GM12878 (cell line): ENCODE measurements at regions of chr1 and their contacts with region 1.

Region 1: GRCh38 chr1:223133824-223134435 is 9.1 kb downstream of the TLR5 start:
- DNase-seq: peak; percentile 15
- ATAC-seq: peak; percentile 84
- H3K4me3 ChIP-seq: no peak overlapping the region
- H3K27ac ChIP-seq: no peak overlapping the region
- H3K4me1 ChIP-seq: no peaks in the 10 kb centered on the region
- H3K27me3 ChIP-seq: peaks cover 0 to 12% of the 10 kb centered on the region in 2 experiments; a peak in 2 of 4 replicates
- CTCF ChIP-seq: peak; percentile 88 to 95 (median 93)
- EP300 ChIP-seq: no peak
- POLR2A ChIP-seq: no peak
- RAD21 ChIP-seq: peak; percentile 78

Region 2: GRCh38 chr1:223123011-223123610 is 10.8 kb before region 1 on chr1:
- CTCF ChIA-PET with region 1: interaction called, 88 read pairs
- POLR2A ChIA-PET with region 1: interaction called, 5 read pairs
- RAD21 ChIA-PET with region 1: interaction called, 11 read pairs
- SMC1A ChIA-PET with region 1: interaction called, 30 read pairs
- in situ Hi-C with region 1: no loop called
- intact Hi-C with region 1: no loop called
- DNase-seq: no peak
- ATAC-seq: no peak
- H3K4me3 ChIP-seq: no peak overlapping the region
- H3K27ac ChIP-seq: no peak overlapping the region
- H3K4me1 ChIP-seq: no peaks in the 10 kb centered on the region
- H3K27me3 ChIP-seq: no peaks in the 10 kb centered on the region; a peak in 1 of 4 replicates
- CTCF ChIP-seq: no peak
- EP300 ChIP-seq: no peak
- POLR2A ChIP-seq: no peak
- RAD21 ChIP-seq: no peak

Region 3: DNA sequence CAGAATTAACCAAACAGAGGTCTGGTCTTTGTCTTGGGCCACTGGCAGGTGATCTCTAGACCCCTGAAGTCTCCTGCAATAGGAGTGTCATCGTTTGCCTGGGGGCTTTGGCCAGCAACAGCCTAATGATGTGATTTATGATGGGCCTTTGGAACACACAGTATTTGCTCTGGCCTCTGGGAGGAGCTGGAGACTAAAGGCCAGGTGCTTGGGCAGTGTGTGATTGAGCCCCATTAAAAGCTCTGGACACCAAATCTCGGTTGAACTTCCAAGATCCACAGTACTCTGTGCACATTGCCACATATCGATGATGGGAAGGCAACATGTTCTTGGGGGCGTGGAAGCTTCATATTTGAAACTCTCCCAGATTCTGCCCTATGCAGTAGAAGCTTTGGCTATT is 41.1 kb after region 1 on chr1:
- CTCF ChIA-PET with region 1: interaction called, 30 read pairs
- POLR2A ChIA-PET with region 1: interaction called, 4 read pairs
- RAD21 ChIA-PET with region 1: interaction called, 31 read pairs
- SMC1A ChIA-PET with region 1: interaction called, 47 read pairs
- in situ Hi-C with region 1: no loop called
- intact Hi-C with region 1: no loop called
- DNase-seq: no peak
- ATAC-seq: peak; percentile 85
- H3K4me3 ChIP-seq: no peak overlapping the region
- H3K27ac ChIP-seq: no peak overlapping the region
- H3K4me1 ChIP-seq: no peaks in the 10 kb centered on the region
- H3K27me3 ChIP-seq: no peaks in the 10 kb centered on the region; a peak in 1 of 4 replicates
- CTCF ChIP-seq: peak in 2 of 3 experiments; percentile 7 to 41; a peak in 1 of 6 replicates
- EP300 ChIP-seq: no peak
- POLR2A ChIP-seq: no peak
- RAD21 ChIP-seq: peak; percentile 19; the same call in 1 of the 2 replicates

Region 4: GRCh38 chr1:223233410-223234169 is 99.7 kb after region 1 on chr1:
- CTCF ChIA-PET with region 1: interaction called, 43 read pairs
- POLR2A ChIA-PET with region 1: no interaction called
- RAD21 ChIA-PET with region 1: interaction called, 6 read pairs
- SMC1A ChIA-PET with region 1: interaction called, 11 read pairs
- in situ Hi-C with region 1: no loop called
- intact Hi-C with region 1: no loop called
- DNase-seq: no peak
- ATAC-seq: peak; percentile 89
- H3K4me3 ChIP-seq: no peak overlapping the region
- H3K27ac ChIP-seq: no peak overlapping the region
- H3K4me1 ChIP-seq: no peaks in the 10 kb centered on the region
- H3K27me3 ChIP-seq: no peaks in the 10 kb centered on the region; a peak in 1 of 4 replicates
- CTCF ChIP-seq: no peak
- EP300 ChIP-seq: 0 out of 4 replicates have a peak, but pooled peaks of 1 of the 2 experiments have one; percentile 16
- POLR2A ChIP-seq: no peak
- RAD21 ChIP-seq: no peak

Region 5: GRCh38 chr1:223628233-223629125 is 494.5 kb after region 1 on chr1:
- CTCF ChIA-PET with region 1: interaction called, 10 read pairs
- POLR2A ChIA-PET with region 1: no interaction called
- RAD21 ChIA-PET with region 1: interaction called, 4 read pairs
- SMC1A ChIA-PET with region 1: no interaction called
- in situ Hi-C with region 1: no loop called
- intact Hi-C with region 1: no loop called
- DNase-seq: no peak
- ATAC-seq: peak; percentile 90
- H3K4me3 ChIP-seq: no peak overlapping the region
- H3K27ac ChIP-seq: no peak overlapping the region
- H3K4me1 ChIP-seq: no peaks in the 10 kb centered on the region
- H3K27me3 ChIP-seq: peaks cover 0 to 3% of the 10 kb centered on the region in 2 experiments; a peak in 1 of 4 replicates
- CTCF ChIP-seq: peak; percentile 67 to 78 (median 71)
- EP300 ChIP-seq: no peak
- POLR2A ChIP-seq: no peak
- RAD21 ChIP-seq: peak; percentile 58